GM12878 (cell line): ENCODE measurements at regions of chr12 and their contacts with region 1.

Region 1: DNA sequence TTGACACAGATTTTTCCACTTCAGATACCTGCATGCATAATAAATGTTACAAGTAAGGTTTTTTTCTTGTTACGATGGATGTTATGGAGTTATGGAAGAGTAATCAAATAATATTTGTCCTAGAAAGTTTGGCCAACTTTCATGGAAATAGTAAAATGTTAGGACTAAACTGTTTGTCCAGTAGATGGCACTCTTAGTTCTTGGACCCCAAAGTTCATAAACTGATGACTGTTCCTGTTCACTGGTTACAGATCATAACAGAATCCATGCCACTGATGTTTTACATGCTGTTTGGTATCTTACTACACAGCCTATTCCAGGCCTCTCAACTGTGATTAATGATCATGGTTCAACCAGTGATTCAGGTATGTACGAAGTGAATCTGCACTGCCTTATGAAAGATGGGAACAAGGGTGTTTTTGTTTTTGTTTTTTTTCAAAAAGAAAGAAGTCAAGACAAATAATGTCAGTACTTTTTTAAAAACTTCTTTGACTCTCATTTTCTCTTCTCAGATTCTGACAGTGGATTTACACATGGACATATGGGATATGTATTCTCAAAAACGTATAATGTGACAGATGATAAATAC is 48.8 kb upstream of the SLCO1C1 start:
- DNase-seq: no peak
- ATAC-seq: peak; percentile 64
- H3K4me3 ChIP-seq: no peak overlapping the region
- H3K27ac ChIP-seq: no peak overlapping the region
- H3K4me1 ChIP-seq: no peaks in the 10 kb centered on the region
- H3K27me3 ChIP-seq: no peaks in the 10 kb centered on the region
- CTCF ChIP-seq: peak; percentile 30 to 54 (median 42); a peak in 4 of 6 replicates
- EP300 ChIP-seq: no peak
- POLR2A ChIP-seq: no peak
- RAD21 ChIP-seq: peak; percentile 56

Region 2: DNA sequence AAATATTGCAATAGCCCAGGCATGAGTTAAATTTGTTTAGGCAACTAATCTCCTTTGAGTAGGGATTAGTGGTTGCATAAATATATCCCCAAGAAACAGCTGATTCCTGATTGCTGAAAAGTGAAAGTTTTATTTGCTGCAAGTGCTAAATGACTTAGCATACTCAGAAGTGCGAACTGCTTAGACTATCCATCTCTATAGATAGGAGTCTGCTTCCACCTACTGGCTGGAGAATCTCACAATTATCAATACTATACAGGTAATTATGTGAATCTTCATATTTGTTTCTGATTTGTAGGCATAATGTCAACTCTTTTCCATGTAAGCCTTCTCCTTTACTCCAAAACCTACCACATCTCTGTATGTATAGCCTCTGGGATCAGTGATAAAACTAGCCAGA is 152.2 kb after region 1 on chr12:
- CTCF ChIA-PET with region 1: interaction called, 3 read pairs
- POLR2A ChIA-PET with region 1: no interaction called
- RAD21 ChIA-PET with region 1: no interaction called
- SMC1A ChIA-PET with region 1: no interaction called
- in situ Hi-C with region 1: no loop called
- intact Hi-C with region 1: loop called (anchors 5 kb)
- DNase-seq: no peak
- ATAC-seq: peak; percentile 63; the same call in 2 of the 3 replicates
- H3K4me3 ChIP-seq: no peak overlapping the region
- H3K27ac ChIP-seq: no peak overlapping the region
- H3K4me1 ChIP-seq: no peaks in the 10 kb centered on the region
- H3K27me3 ChIP-seq: no peaks in the 10 kb centered on the region
- CTCF ChIP-seq: peak in 1 of 3 experiments; percentile 40; a peak in 2 of 6 replicates
- EP300 ChIP-seq: no peak
- POLR2A ChIP-seq: no peak
- RAD21 ChIP-seq: peak; percentile 47; the same call in 1 of the 2 replicates

Region 3: GRCh38 chr12:21065845-21066244 is 419.5 kb after region 1 on chr12:
- CTCF ChIA-PET with region 1: interaction called, 3 read pairs
- POLR2A ChIA-PET with region 1: no interaction called
- RAD21 ChIA-PET with region 1: no interaction called
- SMC1A ChIA-PET with region 1: no interaction called
- in situ Hi-C with region 1: no loop called
- intact Hi-C with region 1: loop called (anchors 10 kb)
- DNase-seq: no peak
- ATAC-seq: 0 out of 3 replicates have a peak, but pooled peaks have one; percentile 39
- H3K4me3 ChIP-seq: no peak overlapping the region
- H3K27ac ChIP-seq: no peak overlapping the region
- H3K4me1 ChIP-seq: no peaks in the 10 kb centered on the region
- H3K27me3 ChIP-seq: no peaks in the 10 kb centered on the region
- CTCF ChIP-seq: peak in 1 of 3 experiments; percentile 44; a peak in 3 of 6 replicates
- EP300 ChIP-seq: no peak
- POLR2A ChIP-seq: no peak
- RAD21 ChIP-seq: peak; percentile 47; the same call in 1 of the 2 replicates

Region 4: DNA sequence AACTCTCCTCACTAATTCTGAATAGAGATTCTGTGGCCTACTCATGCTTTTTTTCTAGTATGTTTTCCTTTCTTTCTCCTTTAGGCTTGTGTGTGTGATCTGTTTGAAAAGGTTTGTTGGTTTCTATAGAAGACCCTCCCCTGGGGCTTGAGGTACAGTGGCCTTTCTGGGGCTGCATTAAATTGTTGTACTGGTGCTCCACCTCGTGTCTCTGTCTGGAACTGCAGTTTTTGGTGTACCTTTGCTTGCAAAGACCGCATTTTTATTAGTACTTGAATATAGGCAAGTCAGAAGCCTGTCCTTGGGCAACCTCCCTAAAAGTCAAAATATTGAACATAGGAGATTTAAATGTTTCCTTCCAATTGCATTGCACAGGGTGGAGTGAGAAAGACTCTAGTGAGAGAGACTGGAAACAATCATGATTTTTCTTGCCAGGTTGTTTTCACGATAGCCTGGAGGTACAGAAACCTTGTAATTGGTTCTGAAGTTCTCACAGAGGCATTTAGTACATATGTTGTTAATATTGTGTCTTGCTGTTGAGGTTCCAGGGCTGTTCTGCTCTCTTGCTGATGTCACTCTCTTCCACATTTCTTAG is 523.6 kb after region 1 on chr12:
- CTCF ChIA-PET with region 1: no interaction called
- POLR2A ChIA-PET with region 1: no interaction called
- RAD21 ChIA-PET with region 1: no interaction called
- SMC1A ChIA-PET with region 1: no interaction called
- in situ Hi-C with region 1: loop called (anchors 10 kb)
- intact Hi-C with region 1: loop called (anchors 1 kb)
- DNase-seq: no peak
- ATAC-seq: peak; percentile 68
- H3K4me3 ChIP-seq: no peak overlapping the region
- H3K27ac ChIP-seq: no peak overlapping the region
- H3K4me1 ChIP-seq: no peaks in the 10 kb centered on the region
- H3K27me3 ChIP-seq: no peaks in the 10 kb centered on the region
- CTCF ChIP-seq: peak; percentile 71 to 77 (median 71)
- EP300 ChIP-seq: no peak
- POLR2A ChIP-seq: no peak
- RAD21 ChIP-seq: peak; percentile 78